Activated CD8-positive, alpha-beta T cell treated with anti-CD3 and anti-CD28 coated beads, Interleukin-2, amount 10 ng/mL, durations not matched to agents 7 days and 5 days (primary cell): ENCODE measurements at regions of chr11 and their contacts with region 1.

Region 1: GRCh38 chr11:47932544-47932943 is 47.8 kb upstream of the PTPRJ start:
- DNase-seq: no peak
- ATAC-seq: no peak
- H3K4me3 Mint-ChIP-seq: no peak overlapping the region
- H3K27ac Mint-ChIP-seq: no peak overlapping the region
- H3K4me1 Mint-ChIP-seq: peaks cover 22% of the 10 kb centered on the region
- H3K27me3 Mint-ChIP-seq: no peaks in the 10 kb centered on the region

Region 2: DNA sequence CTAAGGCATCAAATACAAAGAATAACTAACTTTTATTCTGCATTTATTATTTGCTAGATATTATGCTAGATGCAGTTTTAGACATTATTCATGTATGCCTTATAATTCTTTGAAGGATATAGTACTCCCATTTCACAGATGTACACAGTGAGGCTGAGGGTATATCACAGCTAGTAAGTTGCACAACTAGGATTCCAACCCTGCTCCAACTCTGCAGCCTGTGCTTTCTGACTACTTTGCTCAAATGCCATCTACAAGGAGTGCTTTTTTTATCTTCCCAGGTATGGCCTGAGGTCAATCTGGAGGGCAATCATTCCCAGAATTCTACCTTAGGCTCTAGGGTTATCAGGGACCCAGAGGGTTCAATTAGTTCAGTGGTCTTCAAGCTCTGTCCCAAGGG is 112.8 kb before region 1 on chr11:
- CTCF ChIA-PET with region 1: no interaction called
- POLR2A ChIA-PET with region 1: no interaction called
- DNase-seq: no peak
- ATAC-seq: no peak
- H3K4me3 Mint-ChIP-seq: no peak overlapping the region
- H3K27ac Mint-ChIP-seq: no peak overlapping the region
- H3K4me1 Mint-ChIP-seq: no peaks in the 10 kb centered on the region
- H3K27me3 Mint-ChIP-seq: no peaks in the 10 kb centered on the region

Region 3: GRCh38 chr11:47946682-47947575 is 14.4 kb after region 1 on chr11:
- CTCF ChIA-PET with region 1: interaction called, 17 read pairs
- POLR2A ChIA-PET with region 1: no interaction called
- DNase-seq: peak; percentile 30
- ATAC-seq: no peak
- H3K4me3 Mint-ChIP-seq: no peak overlapping the region
- H3K27ac Mint-ChIP-seq: peak overlapping the region; percentile 25
- H3K4me1 Mint-ChIP-seq: peaks cover 57% of the 10 kb centered on the region
- H3K27me3 Mint-ChIP-seq: no peaks in the 10 kb centered on the region

Region 4: GRCh38 chr11:47961383-47961782 is 28.8 kb after region 1 on chr11:
- CTCF ChIA-PET with region 1: interaction called, 10 read pairs
- POLR2A ChIA-PET with region 1: interaction called, 3 read pairs
- DNase-seq: no peak
- ATAC-seq: no peak
- H3K4me3 Mint-ChIP-seq: no peak overlapping the region
- H3K27ac Mint-ChIP-seq: no peak overlapping the region
- H3K4me1 Mint-ChIP-seq: peaks cover 2% of the 10 kb centered on the region
- H3K27me3 Mint-ChIP-seq: no peaks in the 10 kb centered on the region

Region 5: GRCh38 chr11:48001438-48002021 is 69.0 kb after region 1 on chr11:
- CTCF ChIA-PET with region 1: interaction called, 16 read pairs
- POLR2A ChIA-PET with region 1: interaction called, 3 read pairs
- DNase-seq: peak; percentile 95
- ATAC-seq: peak; percentile 95
- H3K4me3 Mint-ChIP-seq: peak overlapping the region; percentile 52
- H3K27ac Mint-ChIP-seq: peak overlapping the region; percentile 97
- H3K4me1 Mint-ChIP-seq: peaks cover 91% of the 10 kb centered on the region
- H3K27me3 Mint-ChIP-seq: no peaks in the 10 kb centered on the region

Region 6: DNA sequence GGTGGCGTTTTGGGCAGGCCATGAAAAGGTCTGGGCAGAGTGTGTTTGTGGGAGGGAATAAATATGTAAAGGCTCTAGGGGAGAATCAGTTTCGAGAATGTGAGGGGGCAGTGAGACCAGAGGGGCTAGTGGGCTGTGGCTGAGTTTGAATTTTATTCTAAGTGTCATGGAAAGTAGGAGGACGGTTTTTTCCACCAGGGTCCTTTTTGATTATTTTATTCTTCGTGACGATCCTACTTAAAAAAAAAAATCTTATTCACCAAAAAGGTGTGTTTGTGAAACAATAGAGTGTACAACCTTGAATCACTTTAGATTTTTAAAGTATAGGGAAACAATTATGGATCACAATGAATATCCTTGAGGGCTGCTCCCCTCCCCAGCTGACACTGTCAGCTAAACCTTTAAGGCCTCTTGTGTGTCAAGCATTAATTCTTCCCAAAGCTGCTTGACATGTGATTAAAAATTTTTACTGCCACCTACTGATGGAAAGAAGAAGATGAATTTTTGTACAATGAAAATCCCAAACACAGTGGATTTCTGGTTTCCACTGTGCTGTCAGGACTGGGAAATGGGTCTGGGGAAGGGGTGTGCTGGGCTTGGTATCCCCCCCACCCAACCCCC is 176.6 kb after region 1 on chr11:
- CTCF ChIA-PET with region 1: interaction called, 261 read pairs
- POLR2A ChIA-PET with region 1: interaction called, 6 read pairs
- DNase-seq: no peak
- ATAC-seq: peak; percentile 35
- H3K4me3 Mint-ChIP-seq: peak overlapping the region; percentile 67
- H3K27ac Mint-ChIP-seq: peak overlapping the region; percentile 93
- H3K4me1 Mint-ChIP-seq: peaks cover 56% of the 10 kb centered on the region
- H3K27me3 Mint-ChIP-seq: no peaks in the 10 kb centered on the region